H1 (cell line): ENCODE measurements at regions of chr15 and their contacts with region 1.

Region 1: DNA sequence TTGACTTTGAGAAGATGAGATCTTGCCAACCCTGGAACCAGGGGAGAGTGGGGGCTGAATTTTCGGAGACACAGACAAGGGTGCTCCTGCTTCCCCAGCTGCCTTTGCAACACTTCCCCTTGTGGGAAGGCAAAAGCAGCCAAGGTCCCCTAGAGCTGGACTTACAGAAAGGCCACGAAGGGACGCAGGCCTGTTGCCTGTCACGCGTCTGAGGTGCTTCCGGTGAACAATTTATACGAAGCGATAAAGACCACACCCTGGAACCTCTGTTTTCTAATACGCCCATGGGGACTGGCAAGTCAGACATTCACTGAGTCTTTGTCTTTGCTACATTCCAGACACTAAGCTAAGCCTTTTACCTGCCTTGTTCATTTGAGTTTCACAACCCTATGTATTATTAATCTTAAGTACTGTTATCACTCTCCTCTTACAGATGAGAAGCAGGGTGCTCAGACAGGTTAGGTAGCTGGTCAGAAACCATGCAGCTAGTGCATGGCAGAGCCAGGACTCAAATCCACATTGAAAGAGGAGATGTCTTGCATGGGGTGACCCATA is 13.2 kb downstream of the MEGF11 start:
- DNase-seq: no peak
- H3K4me3 ChIP-seq: no peak overlapping the region
- H3K27ac ChIP-seq: no peak overlapping the region
- H3K4me1 ChIP-seq: peaks cover 0 to 3% (median under 1%) of the 10 kb centered on the region in 4 experiments; a peak in 3 of 7 replicates
- H3K27me3 ChIP-seq: peaks cover 0 to 2% (median 0%) of the 10 kb centered on the region in 4 experiments; a peak in 2 of 7 replicates
- CTCF ChIP-seq: no peak
- EP300 ChIP-seq: no peak
- POLR2A ChIP-seq: no peak
- RAD21 ChIP-seq: no peak

Region 2: DNA sequence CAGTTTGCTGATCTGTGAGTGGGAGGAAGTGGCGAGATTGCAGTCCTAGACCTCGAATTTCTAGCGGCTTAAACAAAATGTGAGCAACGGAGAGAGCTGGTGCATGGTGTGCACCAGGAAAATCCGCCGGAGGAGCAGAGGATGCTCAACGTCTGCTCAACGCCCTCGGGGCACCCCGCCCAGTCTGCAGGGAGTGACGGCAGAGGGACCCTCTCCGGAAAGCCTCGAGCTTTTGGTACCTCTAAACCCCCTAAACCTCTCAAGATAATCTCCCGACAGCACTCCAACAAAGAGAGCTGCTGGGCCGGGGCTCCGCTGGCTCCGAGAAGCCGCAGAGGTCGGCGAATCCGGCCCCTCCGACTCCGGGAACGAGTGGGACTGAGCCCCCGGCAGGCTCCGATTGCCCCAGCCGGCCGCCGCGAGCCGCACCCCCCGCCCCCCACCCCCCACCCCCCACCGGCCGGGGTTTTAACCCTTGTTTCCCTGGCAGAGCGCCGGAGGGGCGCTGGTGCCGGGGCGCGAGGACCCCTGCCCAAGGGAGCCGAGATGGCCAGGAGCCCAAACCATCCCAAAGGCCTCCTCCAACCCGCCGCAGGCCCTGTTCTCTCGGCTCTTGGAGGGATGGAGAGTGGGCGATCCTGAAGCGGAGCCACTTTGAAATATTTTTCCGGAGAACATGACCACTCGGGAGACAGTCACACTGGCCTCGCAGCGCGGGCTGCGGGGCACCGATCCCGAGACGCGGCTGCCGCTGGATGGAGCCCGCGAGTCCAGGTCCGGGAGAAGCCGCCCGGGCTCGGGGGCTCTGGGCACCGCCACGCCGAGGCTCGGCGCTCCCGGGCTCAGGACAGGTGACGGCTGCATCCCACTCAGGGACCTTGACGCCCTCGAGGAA is 11.7 kb after region 1 on chr15:
- CTCF ChIA-PET with region 1: interaction called, 31 read pairs
- POLR2A ChIA-PET with region 1: interaction called, 4 read pairs
- DNase-seq: peak in 1 of 2 experiments; percentile 84
- H3K4me3 ChIP-seq: peak overlapping the region; percentile 62 to 88 (median 81)
- H3K27ac ChIP-seq: no peak overlapping the region
- H3K4me1 ChIP-seq: peaks cover 13 to 24% (median 14%) of the 10 kb centered on the region in 4 experiments
- H3K27me3 ChIP-seq: peaks cover 20 to 64% (median 56%) of the 10 kb centered on the region in 4 experiments
- CTCF ChIP-seq: peak; percentile 57 to 69 (median 62)
- EP300 ChIP-seq: no peak
- POLR2A ChIP-seq: no peak
- RAD21 ChIP-seq: peak; percentile 45 to 60; a peak in 3 of 4 replicates

Region 3: GRCh38 chr15:66287461-66288057 is 47.2 kb after region 1 on chr15:
- CTCF ChIA-PET with region 1: interaction called, 12 read pairs
- POLR2A ChIA-PET with region 1: no interaction called
- DNase-seq: no peak
- H3K4me3 ChIP-seq: no peak overlapping the region
- H3K27ac ChIP-seq: no peak overlapping the region
- H3K4me1 ChIP-seq: no peaks in the 10 kb centered on the region
- H3K27me3 ChIP-seq: no peaks in the 10 kb centered on the region
- CTCF ChIP-seq: peak in 2 of 3 experiments; percentile 28 to 39; a peak in 2 of 4 replicates
- EP300 ChIP-seq: no peak
- POLR2A ChIP-seq: no peak
- RAD21 ChIP-seq: peak in 1 of 2 experiments; percentile 57

Region 4: GRCh38 chr15:66298803-66299251 is 58.5 kb after region 1 on chr15:
- CTCF ChIA-PET with region 1: no interaction called
- POLR2A ChIA-PET with region 1: no interaction called
- DNase-seq: no peak
- H3K4me3 ChIP-seq: no peak overlapping the region
- H3K27ac ChIP-seq: no peak overlapping the region
- H3K4me1 ChIP-seq: peaks cover 3 to 12% (median 7%) of the 10 kb centered on the region in 4 experiments; a peak in 6 of 7 replicates
- H3K27me3 ChIP-seq: no peaks in the 10 kb centered on the region
- CTCF ChIP-seq: no peak
- EP300 ChIP-seq: no peak
- POLR2A ChIP-seq: no peak
- RAD21 ChIP-seq: no peak